Activated CD4-positive, alpha-beta memory T cell treated with anti-CD3 and anti-CD28 coated beads, Interleukin-2, amount 10 ng/mL, durations not matched to agents 7 days and 5 days (primary cell): ENCODE measurements at regions of chr15 and their contacts with region 1.

Region 1: GRCh38 chr15:88467073-88467934 is at the starts of genes MRPL46 and MRPS11:
- DNase-seq: peak; percentile 90
- H3K4me3 Mint-ChIP-seq: peak within 1 kb of the TSS; percentile 87
- H3K27ac Mint-ChIP-seq: peak within 1 kb of the TSS; percentile 93
- H3K4me1 Mint-ChIP-seq: peaks cover 42% of the 10 kb centered on the region
- H3K27me3 Mint-ChIP-seq: no peaks in the 10 kb centered on the region
- total RNA-seq, gene MRPL46: 20.3 to 23.9 TPM
- total RNA-seq, gene MRPS11: 48.5 to 50.3 TPM

Region 2: DNA sequence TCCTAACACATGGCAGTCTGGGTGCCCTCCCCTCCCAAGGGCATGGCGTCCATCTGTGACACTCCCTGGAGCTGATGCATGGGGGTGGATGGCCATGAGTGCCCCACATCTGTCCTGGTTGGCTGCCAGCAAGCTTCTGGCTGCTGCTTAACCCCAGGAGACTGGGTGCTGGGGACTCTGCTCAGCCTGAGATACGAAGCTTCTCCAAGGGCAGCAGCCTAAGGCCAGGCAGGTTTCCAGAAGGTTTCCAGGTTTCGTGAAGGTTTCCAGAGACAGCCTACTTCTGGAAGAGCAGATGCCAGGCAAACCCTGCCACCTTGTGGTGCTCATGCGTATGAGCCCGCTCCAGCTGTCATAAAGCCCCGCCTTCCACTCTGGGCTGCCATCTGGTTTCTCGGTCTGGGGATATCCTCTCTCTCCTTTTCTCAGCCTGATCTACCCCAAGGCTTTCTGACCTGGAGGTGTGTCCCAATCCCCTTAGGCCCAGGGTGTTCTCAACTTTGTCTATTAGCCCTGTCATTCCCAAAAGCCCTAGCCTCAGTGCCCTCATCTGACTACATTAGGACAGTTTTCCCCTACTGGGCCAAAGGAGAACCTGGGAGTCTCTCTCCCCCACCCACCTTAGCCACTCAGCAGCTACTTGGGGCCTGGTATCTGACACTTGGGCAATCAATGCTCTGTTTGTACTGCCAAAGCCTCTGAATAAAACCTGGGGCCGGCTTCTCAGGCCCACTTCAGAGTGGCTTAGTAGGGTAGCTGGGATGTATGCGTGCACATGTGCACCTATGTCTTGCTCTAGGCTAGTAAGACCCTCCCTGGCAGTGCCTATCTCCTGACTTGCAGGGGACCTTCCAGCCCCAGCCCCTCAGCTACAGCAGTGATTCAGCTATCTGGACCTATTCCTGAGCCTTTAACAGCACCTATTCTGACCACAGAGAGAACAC is 12.2 kb before region 1 on chr15:
- CTCF ChIA-PET with region 1: interaction called, 30 read pairs
- POLR2A ChIA-PET with region 1: interaction called, 22 read pairs
- DNase-seq: peak; percentile 44
- H3K4me3 Mint-ChIP-seq: no peak overlapping the region
- H3K27ac Mint-ChIP-seq: no peak overlapping the region
- H3K4me1 Mint-ChIP-seq: peaks cover 3% of the 10 kb centered on the region
- H3K27me3 Mint-ChIP-seq: no peaks in the 10 kb centered on the region

Region 3: DNA sequence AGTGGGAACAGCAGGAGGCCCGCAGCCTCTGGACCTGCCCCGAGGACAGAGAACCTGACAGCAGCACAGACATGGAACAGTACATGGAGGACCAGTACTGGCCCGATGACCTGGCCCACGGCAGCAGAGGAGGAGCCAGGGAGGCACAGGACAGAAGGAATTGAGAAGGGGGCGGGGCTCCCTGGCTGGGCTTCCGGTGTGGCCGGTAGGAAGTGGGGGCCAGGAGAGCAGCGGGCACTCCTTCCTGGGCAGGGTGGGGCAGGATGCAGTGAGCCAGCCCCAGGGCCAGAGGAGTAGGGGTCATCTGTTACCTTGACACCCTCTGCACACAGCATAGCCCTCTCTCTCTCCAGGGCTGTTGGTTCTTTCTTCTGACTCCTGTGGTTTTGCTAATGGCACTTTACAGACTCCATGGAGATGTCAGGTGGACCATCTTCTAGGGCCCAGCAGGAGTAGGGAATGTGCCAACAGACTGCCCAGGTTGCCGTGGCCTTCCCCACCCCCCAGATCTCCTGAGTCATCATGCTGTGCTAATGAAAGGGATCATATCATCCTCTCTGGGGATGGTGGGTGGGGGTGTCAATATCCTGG is 162.9 kb after region 1 on chr15:
- CTCF ChIA-PET with region 1: interaction called, 7 read pairs
- POLR2A ChIA-PET with region 1: interaction called, 14 read pairs
- DNase-seq: peak; percentile 73
- H3K4me3 Mint-ChIP-seq: peak overlapping the region; percentile 32
- H3K27ac Mint-ChIP-seq: peak overlapping the region; percentile 95
- H3K4me1 Mint-ChIP-seq: peaks cover 90% of the 10 kb centered on the region
- H3K27me3 Mint-ChIP-seq: no peaks in the 10 kb centered on the region